Activated B cell treated with CpG ODN at 0.5 μM for 24 hours (primary cell): ENCODE measurements at regions of chr3 and their contacts with region 1.

Region 1: DNA sequence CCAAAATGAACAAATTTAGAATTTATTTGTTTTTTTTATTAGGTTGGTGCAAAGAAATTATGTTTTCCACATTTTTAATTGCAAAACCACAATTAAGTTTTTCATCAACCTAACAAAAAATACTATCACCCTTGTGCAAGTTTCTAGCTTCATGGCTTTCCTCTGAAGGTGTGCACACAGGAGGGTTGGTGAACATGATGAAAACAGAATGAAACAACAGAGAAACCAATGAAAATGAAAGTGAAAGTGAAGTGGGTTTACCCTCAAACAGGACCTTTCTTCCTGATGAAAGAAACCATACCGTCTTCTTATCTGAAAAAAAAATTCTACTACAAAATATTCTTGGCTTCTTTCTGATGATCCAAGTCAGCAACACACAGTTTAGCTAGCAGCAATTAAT is 71.9 kb upstream of the FEZF2 start:
- DNase-seq: no peak
- ATAC-seq: no peak
- H3K4me3 Mint-ChIP-seq: no peak overlapping the region
- H3K27ac Mint-ChIP-seq: no peak overlapping the region
- H3K4me1 Mint-ChIP-seq: peaks cover 4% of the 10 kb centered on the region
- H3K27me3 Mint-ChIP-seq: peaks cover 4% of the 10 kb centered on the region
- CTCF ChIP-seq: no peak

Region 2: GRCh38 chr3:62421207-62421606 is 24.1 kb before region 1 on chr3:
- CTCF ChIA-PET with region 1: no interaction called
- POLR2A ChIA-PET with region 1: no interaction called
- intact Hi-C with region 1: loop called (anchors 2 kb)
- DNase-seq: no peak
- ATAC-seq: no peak
- H3K4me3 Mint-ChIP-seq: no peak overlapping the region
- H3K27ac Mint-ChIP-seq: no peak overlapping the region
- H3K4me1 Mint-ChIP-seq: no peaks in the 10 kb centered on the region
- H3K27me3 Mint-ChIP-seq: no peaks in the 10 kb centered on the region
- CTCF ChIP-seq: no peak

Region 3: GRCh38 chr3:64187065-64187959 is 1742.0 kb after region 1 on chr3:
- CTCF ChIA-PET with region 1: no interaction called
- POLR2A ChIA-PET with region 1: no interaction called
- intact Hi-C with region 1: no loop called
- DNase-seq: no peak
- ATAC-seq: no peak
- H3K4me3 Mint-ChIP-seq: no peak overlapping the region
- H3K27ac Mint-ChIP-seq: no peak overlapping the region
- H3K4me1 Mint-ChIP-seq: no peaks in the 10 kb centered on the region
- H3K27me3 Mint-ChIP-seq: no peaks in the 10 kb centered on the region
- CTCF ChIP-seq: no peak